ENCODE measurements at regions of chr10 and their contacts with region 1.

Region 1: DNA sequence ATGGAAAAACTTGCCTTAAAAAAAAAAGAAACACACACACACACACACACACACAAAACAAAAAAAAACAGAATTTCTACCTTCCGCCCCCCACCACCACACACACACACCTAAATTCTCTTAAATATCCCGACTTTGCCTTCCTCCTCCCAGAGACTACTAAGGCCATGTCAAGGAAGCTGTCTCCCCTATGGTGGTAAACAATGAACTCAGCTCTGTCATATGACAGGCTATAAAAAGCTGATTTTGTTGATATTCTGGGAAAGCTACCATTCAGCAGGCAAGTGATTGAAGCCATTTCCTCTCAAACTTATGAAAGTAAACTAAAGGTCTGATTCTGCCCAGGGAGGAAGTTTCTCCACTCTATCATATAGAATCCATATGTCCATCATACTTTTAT is 471.0 kb downstream of the GFRA1 start:
- DNase-seq: no peak
- H3K4me3 ChIP-seq: no peak overlapping the region
- H3K27ac ChIP-seq: no peak overlapping the region
- H3K27me3 ChIP-seq: no peaks in the 10 kb centered on the region
- CTCF ChIP-seq: no peak

Region 2: GRCh38 chr10:115503546-115503945 is 298.4 kb before region 1 on chr10:
- CTCF ChIA-PET with region 1: no interaction called
- POLR2A ChIA-PET with region 1: no interaction called
- DNase-seq: no peak
- H3K4me3 ChIP-seq: no peak overlapping the region
- H3K27ac ChIP-seq: no peak overlapping the region
- H3K27me3 ChIP-seq: no peaks in the 10 kb centered on the region
- CTCF ChIP-seq: no peak

Region 3: DNA sequence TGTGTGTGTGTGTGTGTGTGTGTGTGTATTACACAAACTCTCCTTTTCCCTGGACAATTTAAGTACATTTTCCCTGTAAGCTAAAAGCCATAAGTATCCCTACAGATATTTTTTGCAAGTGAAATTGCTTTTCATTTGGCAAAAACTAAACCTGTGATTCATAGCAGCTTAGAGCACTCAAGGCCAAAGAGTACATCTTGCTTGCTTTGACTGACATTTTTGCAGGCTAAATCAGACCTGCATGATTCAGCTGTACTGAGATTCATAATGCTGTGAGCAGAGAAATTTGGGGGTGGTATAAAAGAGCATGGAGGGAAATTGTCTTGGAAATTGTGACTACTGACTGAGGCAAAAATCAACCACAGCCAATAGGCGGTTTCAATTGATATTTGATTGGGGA is 29.4 kb before region 1 on chr10:
- CTCF ChIA-PET with region 1: interaction called, 18 read pairs
- POLR2A ChIA-PET with region 1: no interaction called
- DNase-seq: peak; percentile 27
- H3K4me3 ChIP-seq: no peak overlapping the region
- H3K27ac ChIP-seq: no peak overlapping the region
- H3K27me3 ChIP-seq: no peaks in the 10 kb centered on the region
- CTCF ChIP-seq: no peak

Region 4: GRCh38 chr10:115777646-115778045 is 24.3 kb before region 1 on chr10:
- CTCF ChIA-PET with region 1: interaction called, 18 read pairs
- POLR2A ChIA-PET with region 1: no interaction called
- DNase-seq: no peak
- H3K4me3 ChIP-seq: no peak overlapping the region
- H3K27ac ChIP-seq: no peak overlapping the region
- H3K27me3 ChIP-seq: no peaks in the 10 kb centered on the region
- CTCF ChIP-seq: no peak

Region 5: GRCh38 chr10:115818012-115818411 is 16.0 kb after region 1 on chr10:
- CTCF ChIA-PET with region 1: interaction called, 26 read pairs
- POLR2A ChIA-PET with region 1: no interaction called
- DNase-seq: no peak
- H3K4me3 ChIP-seq: no peak overlapping the region
- H3K27ac ChIP-seq: no peak overlapping the region
- H3K27me3 ChIP-seq: no peaks in the 10 kb centered on the region
- CTCF ChIP-seq: no peak

Region 6: GRCh38 chr10:115829521-115830205 is 27.7 kb after region 1 on chr10:
- CTCF ChIA-PET with region 1: interaction called, 39 read pairs
- POLR2A ChIA-PET with region 1: no interaction called
- DNase-seq: no peak
- H3K4me3 ChIP-seq: no peak overlapping the region
- H3K27ac ChIP-seq: no peak overlapping the region
- H3K27me3 ChIP-seq: no peaks in the 10 kb centered on the region
- CTCF ChIP-seq: peak; percentile 39

Region 7: DNA sequence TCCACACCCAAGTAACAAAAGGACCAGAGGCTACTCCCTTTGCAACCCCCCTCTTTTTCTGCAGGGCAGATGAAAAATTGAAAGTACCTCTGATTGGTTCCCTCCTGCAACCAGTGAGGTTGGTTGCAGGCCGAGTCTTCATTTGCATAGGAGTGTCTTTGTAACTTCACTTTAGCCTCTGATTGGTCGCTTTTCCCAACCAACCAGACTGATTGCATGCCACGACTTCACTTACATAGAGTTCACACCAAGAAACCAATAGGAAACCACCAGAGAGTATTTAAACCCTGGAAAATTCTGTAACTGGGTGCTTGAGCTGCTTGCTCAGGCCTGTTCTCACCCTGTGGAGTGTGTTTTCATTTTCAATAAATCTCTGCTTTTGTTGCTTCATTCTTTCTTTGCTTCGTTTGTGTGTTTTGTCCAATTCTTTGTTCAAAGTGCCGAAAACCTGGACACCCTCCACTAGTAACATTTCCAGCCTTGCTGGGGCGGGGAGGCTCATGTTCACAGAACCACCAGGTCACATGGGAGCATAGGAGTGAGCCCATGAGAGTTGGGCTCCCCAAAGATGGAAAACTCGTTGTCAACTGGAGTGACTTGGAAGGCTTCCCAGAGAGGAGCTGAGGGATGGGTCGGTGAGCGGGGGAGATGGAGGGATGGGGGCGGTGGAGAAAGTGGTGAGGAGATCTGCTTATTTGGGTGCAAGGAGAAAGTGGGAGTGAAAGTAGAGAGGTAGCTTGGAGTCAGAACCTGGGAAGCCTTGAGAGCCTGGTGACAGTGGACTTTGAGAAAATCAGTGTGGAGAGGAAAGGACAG is 247.4 kb after region 1 on chr10:
- CTCF ChIA-PET with region 1: no interaction called
- POLR2A ChIA-PET with region 1: no interaction called
- DNase-seq: no peak
- H3K4me3 ChIP-seq: no peak overlapping the region
- H3K27ac ChIP-seq: no peak overlapping the region
- H3K27me3 ChIP-seq: peaks cover 3% of the 10 kb centered on the region
- CTCF ChIP-seq: no peak

Region 8: GRCh38 chr10:116385994-116386809 is 584.2 kb after region 1 on chr10:
- CTCF ChIA-PET with region 1: interaction called, 29 read pairs
- POLR2A ChIA-PET with region 1: no interaction called
- DNase-seq: no peak
- H3K4me3 ChIP-seq: no peak overlapping the region
- H3K27ac ChIP-seq: no peak overlapping the region
- H3K27me3 ChIP-seq: no peaks in the 10 kb centered on the region
- CTCF ChIP-seq: peak; percentile 58

Measured in AG04450 (cell line).